Prostate gland (tissue), 2 donors: ENCODE measurements at regions of chr4 and their contacts with region 1.

Region 1: DNA sequence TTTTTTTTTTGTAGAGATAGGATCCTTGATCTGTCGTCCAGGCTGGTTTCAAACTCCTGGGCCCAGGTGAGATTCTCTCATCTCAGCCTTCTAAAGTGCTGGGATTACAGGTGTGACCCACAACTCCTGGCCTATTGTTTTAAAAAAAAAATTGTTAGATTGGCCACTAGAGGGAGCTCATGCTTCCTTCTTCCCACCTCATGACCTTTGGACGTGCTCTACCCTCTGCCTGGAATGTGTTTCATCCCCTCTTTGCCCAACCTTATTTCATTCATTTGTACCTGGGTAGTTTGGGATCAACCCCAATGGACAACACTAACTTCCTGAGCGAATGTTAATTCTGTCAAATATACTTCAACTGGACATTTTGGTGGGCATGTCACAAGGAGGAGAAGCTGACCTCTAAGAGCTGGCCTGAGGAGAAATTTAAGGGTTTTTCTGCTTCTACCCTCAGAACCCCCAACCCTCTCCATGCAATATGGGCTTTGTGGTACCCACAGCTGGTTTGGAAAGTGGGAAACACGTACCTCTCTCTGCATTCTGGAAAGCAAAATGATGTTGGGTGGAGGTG is 6.4 kb downstream of the PPEF2 start:
- DNase-seq: no peak
- H3K4me3 ChIP-seq: no peak overlapping the region
- H3K27ac ChIP-seq: no peak overlapping the region
- H3K4me1 ChIP-seq: no peaks in the 10 kb centered on the region
- H3K27me3 ChIP-seq: no peaks in the 10 kb centered on the region
- CTCF ChIP-seq: peak; percentile 44 to 67 (median 51)
- POLR2A ChIP-seq: no peak

Region 2: GRCh38 chr4:75940692-75941253 is 44.9 kb after region 1 on chr4 and contains the start of gene NAAA:
- intact Hi-C with region 1: loop called (anchors 5 kb)
- DNase-seq: peak; percentile 82
- H3K4me3 ChIP-seq: peak within 1 kb of the TSS; percentile 80 to 89
- H3K27ac ChIP-seq: peak within 1 kb of the TSS; percentile 81 to 92
- H3K4me1 ChIP-seq: no peaks in the 10 kb centered on the region
- H3K27me3 ChIP-seq: no peaks in the 10 kb centered on the region
- CTCF ChIP-seq: peak in 2 of 4 experiments; percentile 39 to 61
- POLR2A ChIP-seq: peak; percentile 36
- total RNA-seq, gene NAAA: 174 to 1,058 TPM